Testis (tissue), 5 donors: ENCODE measurements at regions of chr1 and their contacts with region 1.

Region 1: DNA sequence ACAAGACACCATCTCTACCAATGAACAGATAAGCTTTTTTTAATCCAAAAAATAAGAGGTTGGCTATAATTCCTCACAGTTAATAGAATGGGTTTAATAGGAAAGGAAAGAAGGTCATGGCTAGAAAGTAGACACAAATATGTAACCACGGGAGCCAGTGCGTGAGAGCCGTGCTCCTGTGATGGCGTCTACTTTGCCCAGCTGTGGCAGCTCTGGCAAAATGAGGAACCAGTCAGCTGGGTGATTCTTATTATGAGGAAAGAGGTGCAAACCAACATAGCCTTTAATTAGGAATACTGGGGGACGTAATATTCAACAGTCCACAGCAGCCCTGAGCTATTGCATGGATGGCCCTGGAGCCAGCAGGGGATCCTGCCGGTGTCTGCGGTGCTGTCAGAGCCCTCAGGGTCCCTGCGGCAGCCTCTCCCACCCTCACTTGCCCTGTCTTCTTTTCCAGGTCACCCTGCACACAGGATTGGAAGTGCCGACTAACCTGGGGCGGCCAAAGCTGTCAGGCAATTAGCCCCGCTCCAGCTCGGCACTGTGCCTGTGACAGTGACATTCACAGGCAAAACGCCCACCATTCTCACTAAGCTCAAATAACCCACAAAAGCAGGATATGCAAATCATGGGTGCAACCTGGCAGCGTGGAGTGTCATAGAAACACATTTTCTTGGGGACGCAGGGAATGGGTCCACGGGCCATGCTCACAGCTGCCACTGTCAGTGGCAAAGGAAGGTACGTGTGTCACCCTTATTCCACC is 25.9 kb upstream of the GNPAT start:
- DNase-seq: no peak
- H3K4me3 ChIP-seq: no peak overlapping the region
- H3K27ac ChIP-seq: no peak overlapping the region
- H3K4me1 ChIP-seq: peaks cover 4% of the 10 kb centered on the region
- H3K27me3 ChIP-seq: no peaks in the 10 kb centered on the region
- CTCF ChIP-seq: no peak
- POLR2A ChIP-seq: no peak

Region 2: DNA sequence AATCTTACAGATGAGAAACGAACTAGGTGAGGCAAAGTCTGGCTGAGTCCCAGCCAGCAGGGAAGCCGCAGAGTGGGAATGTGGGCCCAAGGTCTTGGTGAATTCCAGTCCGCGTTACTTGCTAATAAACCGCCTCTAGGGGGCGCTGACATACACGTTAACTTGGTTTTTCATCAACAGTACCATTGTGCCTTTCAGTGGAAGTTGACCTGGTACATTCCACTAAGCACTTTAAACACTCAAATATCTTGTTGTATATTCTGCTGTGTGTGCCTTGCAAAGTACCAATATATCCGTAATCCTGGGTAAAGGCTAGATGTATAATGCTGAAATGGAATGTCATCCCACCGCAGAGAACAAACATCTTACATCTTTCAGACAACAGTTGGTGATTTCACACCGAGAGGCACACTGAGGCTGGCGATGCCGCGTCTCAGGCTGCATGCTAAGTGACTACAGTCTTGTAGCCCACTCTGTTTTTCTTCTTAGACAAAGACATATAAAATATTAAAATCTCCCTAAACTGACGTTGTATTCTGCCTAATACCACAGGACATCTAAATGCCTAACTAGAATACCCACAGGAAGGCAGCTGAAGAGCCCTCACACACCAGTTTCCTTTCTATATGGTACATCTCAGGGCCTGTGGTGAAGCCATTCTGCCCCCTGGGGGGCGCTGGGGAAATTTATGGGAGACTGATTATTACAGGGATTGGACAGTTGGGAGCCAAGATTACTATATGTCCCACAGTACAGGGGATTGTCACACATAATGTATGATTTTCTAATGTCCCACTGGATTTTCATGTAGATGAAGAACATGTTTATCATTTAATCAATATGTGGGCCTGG is 297.6 kb before region 1 on chr1:
- intact Hi-C with region 1: loop called (anchors 5 kb)
- DNase-seq: peak; percentile 94
- H3K4me3 ChIP-seq: no peak overlapping the region
- H3K27ac ChIP-seq: no peak overlapping the region
- H3K4me1 ChIP-seq: no peaks in the 10 kb centered on the region
- H3K27me3 ChIP-seq: no peaks in the 10 kb centered on the region
- CTCF ChIP-seq: peak; percentile 14 to 77 (median 58)
- POLR2A ChIP-seq: no peak

Region 3: DNA sequence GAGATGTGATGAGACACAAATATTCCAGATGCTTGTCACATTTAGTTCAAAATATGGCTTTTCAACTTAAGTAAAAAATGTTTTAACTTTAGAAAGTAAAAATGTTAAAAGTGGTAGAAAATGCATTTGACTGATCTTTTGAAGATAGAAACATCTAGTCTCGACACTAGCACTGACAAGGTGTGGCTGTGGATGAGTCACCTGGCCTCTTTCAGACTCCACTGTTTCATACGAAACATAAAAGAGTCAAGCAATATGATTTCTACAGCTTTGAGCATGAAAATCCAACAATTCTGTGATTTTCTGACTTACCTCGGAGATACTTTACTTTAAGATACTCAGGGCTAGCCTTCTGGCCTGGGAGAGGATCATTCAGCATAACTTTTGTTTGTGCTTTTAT is 284.1 kb before region 1 on chr1:
- intact Hi-C with region 1: no loop called
- DNase-seq: no peak
- H3K4me3 ChIP-seq: no peak overlapping the region
- H3K27ac ChIP-seq: no peak overlapping the region
- H3K4me1 ChIP-seq: no peaks in the 10 kb centered on the region
- H3K27me3 ChIP-seq: no peaks in the 10 kb centered on the region
- CTCF ChIP-seq: no peak
- POLR2A ChIP-seq: no peak

Region 4: DNA sequence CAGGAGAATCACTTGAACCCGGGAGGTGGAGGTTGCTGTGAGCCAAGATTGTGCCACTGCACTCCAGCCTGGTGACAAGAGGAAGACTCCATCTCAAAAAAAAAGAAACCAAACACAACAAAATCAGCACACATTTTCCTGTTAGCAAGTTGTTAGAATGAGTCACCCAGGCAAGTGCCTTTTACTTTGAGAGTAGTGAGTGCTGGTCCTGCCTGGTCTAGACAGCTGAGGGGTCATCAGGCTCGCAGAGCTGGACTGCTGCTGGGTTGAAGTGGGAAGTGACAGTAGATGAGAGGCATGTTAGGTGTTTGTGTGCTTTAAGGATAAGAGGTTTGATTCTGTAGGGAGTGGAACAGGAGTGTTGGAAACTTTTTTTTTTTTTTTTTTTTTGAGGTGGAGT is 57.8 kb after region 1 on chr1:
- intact Hi-C with region 1: no loop called
- DNase-seq: no peak
- H3K4me3 ChIP-seq: no peak overlapping the region
- H3K27ac ChIP-seq: no peak overlapping the region
- H3K4me1 ChIP-seq: no peaks in the 10 kb centered on the region
- H3K27me3 ChIP-seq: no peaks in the 10 kb centered on the region
- CTCF ChIP-seq: no peak
- POLR2A ChIP-seq: no peak

Region 5: GRCh38 chr1:231603598-231604275 is 388.6 kb after region 1 on chr1:
- intact Hi-C with region 1: no loop called
- DNase-seq: peak; percentile 41
- H3K4me3 ChIP-seq: peak overlapping the region in 1 of 2 donors; percentile 33
- H3K27ac ChIP-seq: no peak overlapping the region
- H3K4me1 ChIP-seq: no peaks in the 10 kb centered on the region
- H3K27me3 ChIP-seq: no peaks in the 10 kb centered on the region
- CTCF ChIP-seq: peak; percentile 50 to 87 (median 52)
- POLR2A ChIP-seq: no peak

Region 6: DNA sequence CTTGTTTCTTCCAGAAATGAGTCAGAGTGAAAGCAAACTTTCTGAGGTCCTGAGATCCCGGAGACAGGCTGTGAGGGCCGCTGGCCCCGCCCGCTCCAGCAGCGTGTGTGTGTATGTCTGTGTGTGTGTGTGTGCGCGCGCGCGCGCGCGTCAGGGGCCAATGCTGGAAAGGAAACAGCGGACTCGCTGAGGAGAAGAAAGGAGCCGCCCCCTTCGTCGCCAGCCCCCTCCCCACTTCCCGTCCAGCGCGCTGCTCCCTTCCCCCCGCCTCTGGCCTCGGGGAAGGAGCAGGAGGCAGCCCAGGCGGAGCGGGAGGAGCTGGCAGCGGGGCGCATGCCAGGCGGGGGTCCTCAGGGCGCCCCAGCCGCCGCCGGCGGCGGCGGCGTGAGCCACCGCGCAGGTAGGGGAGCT is 411.4 kb after region 1 on chr1 and contains the start of gene DISC1:
- intact Hi-C with region 1: no loop called
- DNase-seq: peak; percentile 77
- H3K4me3 ChIP-seq: peak within 1 kb of the TSS; percentile 62 to 75
- H3K27ac ChIP-seq: peak within 1 kb of the TSS; percentile 37 to 71
- H3K4me1 ChIP-seq: no peaks in the 10 kb centered on the region
- H3K27me3 ChIP-seq: no peaks in the 10 kb centered on the region
- CTCF ChIP-seq: no peak
- POLR2A ChIP-seq: no peak
- total RNA-seq, gene DISC1: 5.7 to 6.8 TPM